ENCODE measurements at regions of chr4 and their contacts with region 1.

Region 1: DNA sequence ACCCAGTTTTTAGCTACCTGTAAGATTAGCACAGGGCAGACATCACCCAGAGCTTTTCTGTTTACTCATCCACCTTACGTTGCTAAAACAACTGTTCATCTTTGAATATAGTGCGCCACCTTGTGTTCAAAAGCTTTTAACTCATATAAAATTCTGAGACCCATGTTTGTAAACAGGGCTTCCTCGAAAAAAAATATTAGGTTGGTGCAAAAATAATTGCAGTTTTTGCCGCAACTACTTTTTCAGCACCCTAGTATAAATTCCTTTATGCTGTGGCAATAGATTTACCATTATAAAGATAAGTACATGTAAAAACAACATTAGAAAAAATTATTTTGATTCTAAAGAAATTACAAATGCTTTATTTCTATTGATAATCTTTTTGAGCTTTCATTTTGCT is 147.9 kb downstream of the LRBA start:
- DNase-seq: no peak
- H3K4me3 Mint-ChIP-seq: no peak overlapping the region
- H3K27ac Mint-ChIP-seq: no peak overlapping the region
- H3K4me1 Mint-ChIP-seq: no peaks in the 10 kb centered on the region
- H3K27me3 Mint-ChIP-seq: no peaks in the 10 kb centered on the region

Region 2: GRCh38 chr4:150297861-150298474 is 569.2 kb before region 1 on chr4:
- CTCF ChIA-PET with region 1: interaction called, 59 read pairs
- POLR2A ChIA-PET with region 1: interaction called, 3 read pairs
- DNase-seq: peak; percentile 37
- H3K4me3 Mint-ChIP-seq: no peak overlapping the region
- H3K27ac Mint-ChIP-seq: no peak overlapping the region
- H3K4me1 Mint-ChIP-seq: peaks cover 4% of the 10 kb centered on the region
- H3K27me3 Mint-ChIP-seq: no peaks in the 10 kb centered on the region

Region 3: DNA sequence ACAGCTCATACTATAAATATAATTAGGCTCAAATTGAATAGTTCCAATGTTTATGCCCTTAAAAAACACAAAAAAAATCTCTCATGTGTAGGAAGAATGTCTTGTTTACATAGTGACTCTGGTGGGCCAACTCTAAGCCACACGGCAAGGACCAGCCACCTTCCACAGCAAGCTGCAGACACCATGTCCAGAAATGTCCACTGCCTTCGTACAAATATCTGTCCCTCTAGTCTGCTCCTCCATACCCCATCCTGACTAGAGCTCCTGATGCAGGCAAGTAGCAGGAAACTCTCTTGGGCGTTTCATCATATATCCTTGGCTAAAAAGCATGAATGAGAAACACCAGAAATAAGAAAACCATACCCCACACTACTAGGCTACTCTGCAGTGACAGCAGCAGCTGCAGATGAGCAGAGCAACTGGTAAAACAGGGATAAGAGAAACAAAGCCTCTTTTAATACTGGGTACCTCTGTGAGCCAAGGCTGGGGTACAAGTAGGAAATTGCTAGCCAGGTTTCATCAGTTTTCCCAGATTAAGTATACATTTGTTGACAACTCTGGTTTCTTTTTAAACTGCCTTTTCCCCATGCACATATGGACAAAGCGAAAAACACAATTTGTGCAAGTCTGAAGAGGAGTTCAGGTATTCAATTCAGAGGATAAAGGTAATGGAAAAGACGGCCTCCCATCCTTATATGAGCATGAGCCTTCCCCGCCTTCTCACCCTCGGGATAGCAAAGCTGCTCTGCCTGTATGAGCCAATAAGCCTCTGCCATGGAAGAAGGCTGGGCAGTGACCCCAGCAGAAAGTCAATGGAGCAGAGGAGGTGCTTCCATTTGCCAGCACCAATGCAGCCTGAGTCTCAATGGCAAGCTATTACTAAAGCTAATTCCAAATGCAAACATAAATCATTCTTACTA is 543.5 kb before region 1 on chr4:
- CTCF ChIA-PET with region 1: interaction called, 11 read pairs
- POLR2A ChIA-PET with region 1: no interaction called
- DNase-seq: no peak
- H3K4me3 Mint-ChIP-seq: no peak overlapping the region
- H3K27ac Mint-ChIP-seq: no peak overlapping the region
- H3K4me1 Mint-ChIP-seq: no peaks in the 10 kb centered on the region
- H3K27me3 Mint-ChIP-seq: no peaks in the 10 kb centered on the region

Region 4: GRCh38 chr4:150828159-150828558 is 39.0 kb before region 1 on chr4:
- CTCF ChIA-PET with region 1: interaction called, 23 read pairs
- POLR2A ChIA-PET with region 1: interaction called, 3 read pairs
- DNase-seq: peak; percentile 76
- H3K4me3 Mint-ChIP-seq: peak overlapping the region; percentile 70
- H3K27ac Mint-ChIP-seq: peak overlapping the region; percentile 91
- H3K4me1 Mint-ChIP-seq: peaks cover 32% of the 10 kb centered on the region
- H3K27me3 Mint-ChIP-seq: no peaks in the 10 kb centered on the region

Region 5: DNA sequence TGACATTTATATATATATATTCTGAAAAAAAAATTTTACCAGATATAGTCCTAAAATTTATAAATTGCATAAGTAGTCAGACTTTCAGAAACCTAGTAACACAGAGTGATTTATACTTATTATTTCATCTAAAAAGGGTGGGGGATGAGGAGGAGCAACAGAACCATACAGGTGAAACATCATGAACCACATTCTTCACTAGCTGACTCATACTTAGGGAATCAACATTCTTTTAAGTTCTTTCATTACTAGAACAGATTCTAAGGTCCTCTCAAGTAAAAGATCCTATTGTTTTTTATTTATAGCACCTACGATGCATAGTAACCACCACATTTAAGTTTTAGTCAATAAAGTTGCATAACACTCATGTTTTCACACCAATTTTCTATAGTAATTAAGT is 18.1 kb before region 1 on chr4:
- CTCF ChIA-PET with region 1: interaction called, 16 read pairs
- POLR2A ChIA-PET with region 1: no interaction called
- DNase-seq: no peak
- H3K4me3 Mint-ChIP-seq: no peak overlapping the region
- H3K27ac Mint-ChIP-seq: no peak overlapping the region
- H3K4me1 Mint-ChIP-seq: peaks cover 5% of the 10 kb centered on the region
- H3K27me3 Mint-ChIP-seq: no peaks in the 10 kb centered on the region

Region 6: DNA sequence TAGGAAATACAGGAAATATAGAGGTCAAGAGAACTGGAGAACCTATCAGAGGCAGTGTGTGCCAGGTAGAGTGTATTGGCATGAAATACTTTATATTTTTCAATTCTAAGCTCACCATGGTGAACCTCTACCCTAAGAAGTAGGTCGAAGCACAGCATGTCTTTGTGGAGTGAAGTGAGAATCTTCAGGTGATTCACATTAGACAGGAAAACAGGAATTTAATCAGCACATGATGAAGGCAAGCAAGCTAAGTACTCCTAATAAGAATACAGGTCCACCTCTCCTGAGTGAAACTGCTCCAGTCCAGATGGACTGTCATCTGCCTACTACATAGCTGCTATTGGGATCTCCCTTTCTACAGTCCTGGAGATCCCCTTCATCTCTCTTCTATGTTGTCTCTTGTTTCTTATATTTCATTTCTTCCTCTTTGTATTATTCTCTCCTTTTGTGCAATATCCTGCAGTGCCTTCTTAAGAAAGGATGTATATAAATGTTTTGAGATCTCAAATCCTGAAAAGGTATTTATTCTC is 11.1 kb before region 1 on chr4:
- CTCF ChIA-PET with region 1: interaction called, 16 read pairs
- POLR2A ChIA-PET with region 1: no interaction called
- DNase-seq: no peak
- H3K4me3 Mint-ChIP-seq: no peak overlapping the region
- H3K27ac Mint-ChIP-seq: no peak overlapping the region
- H3K4me1 Mint-ChIP-seq: peaks cover 5% of the 10 kb centered on the region
- H3K27me3 Mint-ChIP-seq: no peaks in the 10 kb centered on the region

Measured in activated CD4-positive, alpha-beta memory T cell treated with anti-CD3 and anti-CD28 coated beads, Interleukin-2, amount 10 ng/mL, durations not matched to agents 7 days and 5 days (primary cell).